Calu3 (cell line): ENCODE measurements at regions of chr5 and their contacts with region 1.

Region 1: DNA sequence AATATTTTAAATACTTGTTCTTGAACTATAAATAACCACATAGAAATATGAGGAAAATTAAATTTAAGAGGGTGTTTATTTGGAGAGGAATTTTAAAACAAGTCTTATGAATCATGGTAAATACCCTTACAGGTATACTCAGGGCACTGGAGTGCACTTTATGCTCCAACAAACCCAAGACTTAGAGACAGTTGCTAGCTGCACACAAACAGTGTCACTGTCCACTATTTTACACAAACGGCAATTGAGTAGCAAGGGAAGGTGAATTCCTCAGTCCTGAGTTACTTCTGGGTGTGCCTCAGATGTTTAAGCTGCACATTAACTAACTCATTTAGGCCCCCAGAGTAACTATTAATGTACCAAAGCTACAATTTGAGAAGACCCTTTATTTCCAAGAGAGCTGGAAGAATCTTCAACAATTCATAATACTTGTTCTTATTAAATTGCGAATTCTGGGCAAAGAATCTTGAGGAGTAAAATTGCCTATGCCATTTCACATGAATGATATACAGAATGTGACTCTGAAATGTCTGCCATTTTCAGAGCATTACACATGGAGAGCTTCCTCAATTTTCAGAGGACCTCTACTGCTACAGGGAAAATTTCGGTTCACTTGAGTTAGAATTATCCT is 371.2 kb downstream of the PDE4D start:
- DNase-seq: peak; percentile 42
- H3K4me3 Mint-ChIP-seq: no peak overlapping the region
- H3K27ac Mint-ChIP-seq: peak overlapping the region; percentile 62
- H3K4me1 Mint-ChIP-seq: peaks cover 18% of the 10 kb centered on the region
- H3K27me3 Mint-ChIP-seq: no peaks in the 10 kb centered on the region
- CTCF ChIP-seq: no peak

Region 2: GRCh38 chr5:59537961-59538749 is 15.8 kb after region 1 on chr5:
- CTCF ChIA-PET with region 1: no interaction called
- intact Hi-C with region 1: no loop called
- DNase-seq: no peak
- H3K4me3 Mint-ChIP-seq: no peak overlapping the region
- H3K27ac Mint-ChIP-seq: no peak overlapping the region
- H3K4me1 Mint-ChIP-seq: peaks cover 19% of the 10 kb centered on the region
- H3K27me3 Mint-ChIP-seq: no peaks in the 10 kb centered on the region
- CTCF ChIP-seq: no peak

Region 3: DNA sequence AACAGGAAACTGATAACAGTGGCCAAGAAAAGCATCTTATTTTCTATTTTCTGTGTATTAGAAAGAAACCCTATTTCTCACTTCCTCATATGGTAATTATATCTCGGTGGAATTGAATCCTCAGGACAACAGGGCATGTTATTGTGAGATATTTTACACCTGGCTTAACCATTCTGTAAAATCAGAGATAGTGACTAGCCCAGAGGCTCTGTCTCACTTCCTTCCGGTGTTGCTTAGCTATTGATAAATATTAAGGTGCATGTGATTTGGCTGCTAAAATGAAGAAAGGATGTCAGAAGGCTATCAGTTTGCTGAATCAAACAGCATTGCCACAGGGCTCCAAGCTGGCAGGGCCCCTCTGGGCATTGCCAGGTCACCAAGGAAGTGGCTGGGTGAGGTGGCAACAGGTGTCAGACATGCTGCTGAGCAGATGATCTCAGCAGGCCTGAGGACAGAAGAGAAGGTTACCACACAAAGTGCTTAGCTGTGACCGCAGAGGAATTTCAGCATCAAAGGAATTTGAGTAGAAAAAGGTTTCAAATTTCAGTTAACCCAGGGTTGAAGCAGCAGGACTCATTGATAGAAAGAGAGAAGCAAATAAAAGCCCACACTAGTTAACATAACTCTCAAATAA is 40.6 kb after region 1 on chr5:
- CTCF ChIA-PET with region 1: interaction called, 4 read pairs
- intact Hi-C with region 1: loop called (anchors 5 kb)
- DNase-seq: peak; percentile 81
- H3K4me3 Mint-ChIP-seq: no peak overlapping the region
- H3K27ac Mint-ChIP-seq: peak overlapping the region; percentile 55
- H3K4me1 Mint-ChIP-seq: peaks cover 80% of the 10 kb centered on the region
- H3K27me3 Mint-ChIP-seq: no peaks in the 10 kb centered on the region
- CTCF ChIP-seq: no peak